ENCODE measurements at regions of chr1 and their contacts with region 1.

Region 1: GRCh38 chr1:222928212-222928611 is 113.4 kb downstream of the DISP1 start:
- DNase-seq: peak; percentile 28
- ATAC-seq: peak; percentile 70
- H3K4me3 ChIP-seq: no peak overlapping the region
- H3K27ac ChIP-seq: no peak overlapping the region
- H3K4me1 ChIP-seq: peaks cover 10% of the 10 kb centered on the region; the same call in 1 of the 2 replicates
- H3K27me3 ChIP-seq: no peaks in the 10 kb centered on the region
- CTCF ChIP-seq: no peak

Region 2: DNA sequence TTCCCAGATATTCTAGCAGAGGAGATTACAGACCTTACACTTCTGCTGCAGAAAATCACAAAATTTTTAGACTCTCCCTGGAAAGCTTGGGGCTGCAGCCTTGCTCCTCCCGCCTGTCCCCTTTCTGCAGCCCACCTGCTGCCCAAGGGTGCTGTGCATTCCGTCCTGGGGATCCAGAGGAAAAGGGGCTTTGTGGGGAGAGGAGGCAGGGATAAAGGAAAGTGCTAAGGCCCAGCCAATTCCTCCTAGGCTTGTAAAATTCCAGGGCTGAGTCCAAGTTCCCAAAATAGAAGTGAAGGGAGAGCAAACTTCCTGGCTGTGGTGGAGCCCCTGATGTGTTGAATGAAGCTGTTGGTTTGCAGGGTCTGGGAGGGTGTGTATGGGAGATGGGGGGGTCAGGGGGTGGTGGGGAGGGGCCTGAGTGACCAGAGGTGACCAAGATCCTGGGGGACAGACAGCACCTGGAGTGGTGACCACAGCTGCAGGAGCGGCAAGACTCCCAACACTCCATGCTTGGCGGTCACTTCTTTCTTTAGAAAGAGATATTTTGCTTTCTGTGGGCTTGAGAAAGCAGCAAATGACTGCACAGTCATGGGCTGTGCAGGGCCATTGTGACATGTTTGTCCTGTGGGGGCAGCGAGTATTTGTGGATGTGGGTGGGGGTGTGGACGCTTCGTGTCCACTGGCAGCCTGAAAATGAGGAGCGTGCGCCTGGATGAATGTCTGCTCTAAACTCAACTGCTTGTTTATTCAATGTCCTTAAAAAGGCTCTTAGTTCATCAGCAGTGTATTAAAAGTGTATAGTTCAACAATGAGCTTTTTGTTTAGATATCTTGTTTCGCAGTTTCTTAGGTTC is 146.5 kb after region 1 on chr1:
- CTCF ChIA-PET with region 1: no interaction called
- POLR2A ChIA-PET with region 1: no interaction called
- intact Hi-C with region 1: loop called (anchors 10 kb)
- DNase-seq: no peak
- ATAC-seq: peak; percentile 43; the same call in 1 of the 2 replicates
- H3K4me3 ChIP-seq: no peak overlapping the region
- H3K27ac ChIP-seq: no peak overlapping the region
- H3K4me1 ChIP-seq: no peaks in the 10 kb centered on the region
- H3K27me3 ChIP-seq: peaks cover 14% of the 10 kb centered on the region
- CTCF ChIP-seq: no peak

Measured in PC-3 (cell line).